Ovary (tissue), 10 donors: ENCODE measurements at regions of chr1 and their contacts with region 1.

Region 1: GRCh38 chr1:18922319-18922726 is 20.0 kb upstream of the ALDH4A1 start:
- DNase-seq: peak; percentile 86 to 94 (median 90)
- H3K4me3 ChIP-seq: no peak overlapping the region
- H3K27ac ChIP-seq: peak overlapping the region; percentile 74 to 91
- H3K4me1 ChIP-seq: peaks cover 20% of the 10 kb centered on the region
- H3K27me3 ChIP-seq: no peaks in the 10 kb centered on the region
- CTCF ChIP-seq: peak in 2 of 3 donors; percentile 53 to 61
- EP300 ChIP-seq: no peak
- POLR2A ChIP-seq: peak; percentile 29

Region 2: DNA sequence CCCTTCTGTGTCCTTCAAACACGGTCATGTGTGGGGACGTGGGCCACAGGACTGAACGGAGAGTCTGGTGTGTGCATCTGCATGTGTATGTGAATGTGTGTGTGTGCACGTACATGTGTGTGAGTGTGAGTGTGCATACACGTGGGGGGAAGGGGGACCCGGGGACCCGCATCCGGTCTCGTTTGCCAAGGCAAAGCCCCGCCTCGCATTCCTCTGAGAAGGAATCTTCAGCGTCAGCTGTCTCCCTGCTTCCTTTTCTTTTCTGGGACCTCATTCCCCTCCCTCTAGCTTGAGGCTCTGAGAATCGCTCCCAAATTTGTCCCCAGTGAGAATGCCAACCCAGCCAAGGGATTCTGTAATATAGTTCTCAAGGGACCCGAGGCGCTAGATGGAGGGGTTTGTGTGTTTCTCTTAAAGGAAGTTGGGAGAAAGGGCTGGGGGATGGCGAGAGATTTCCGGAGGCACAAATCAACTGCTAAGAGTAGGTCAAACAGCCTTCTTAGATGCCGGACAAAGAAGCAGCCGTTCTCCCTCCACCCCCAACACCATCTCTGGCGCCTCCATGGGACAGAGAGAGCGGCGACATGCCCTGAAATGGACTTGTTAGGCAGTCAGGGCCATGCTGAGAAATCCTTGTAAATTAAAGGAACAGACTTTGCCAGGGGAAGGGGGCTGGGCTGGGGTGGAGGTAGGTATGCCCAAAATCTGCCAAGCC is 27.5 kb after region 1 on chr1:
- intact Hi-C with region 1: loop called in 3 of 4 experiments (anchors 5 kb)
- DNase-seq: peak in 2 of 5 donors; percentile 40 to 56
- H3K4me3 ChIP-seq: peak overlapping the region; percentile 0
- H3K27ac ChIP-seq: peak overlapping the region; percentile 44 to 45
- H3K4me1 ChIP-seq: peaks cover 14% of the 10 kb centered on the region
- H3K27me3 ChIP-seq: no peaks in the 10 kb centered on the region
- CTCF ChIP-seq: no peak
- EP300 ChIP-seq: no peak
- POLR2A ChIP-seq: no peak

Region 3: DNA sequence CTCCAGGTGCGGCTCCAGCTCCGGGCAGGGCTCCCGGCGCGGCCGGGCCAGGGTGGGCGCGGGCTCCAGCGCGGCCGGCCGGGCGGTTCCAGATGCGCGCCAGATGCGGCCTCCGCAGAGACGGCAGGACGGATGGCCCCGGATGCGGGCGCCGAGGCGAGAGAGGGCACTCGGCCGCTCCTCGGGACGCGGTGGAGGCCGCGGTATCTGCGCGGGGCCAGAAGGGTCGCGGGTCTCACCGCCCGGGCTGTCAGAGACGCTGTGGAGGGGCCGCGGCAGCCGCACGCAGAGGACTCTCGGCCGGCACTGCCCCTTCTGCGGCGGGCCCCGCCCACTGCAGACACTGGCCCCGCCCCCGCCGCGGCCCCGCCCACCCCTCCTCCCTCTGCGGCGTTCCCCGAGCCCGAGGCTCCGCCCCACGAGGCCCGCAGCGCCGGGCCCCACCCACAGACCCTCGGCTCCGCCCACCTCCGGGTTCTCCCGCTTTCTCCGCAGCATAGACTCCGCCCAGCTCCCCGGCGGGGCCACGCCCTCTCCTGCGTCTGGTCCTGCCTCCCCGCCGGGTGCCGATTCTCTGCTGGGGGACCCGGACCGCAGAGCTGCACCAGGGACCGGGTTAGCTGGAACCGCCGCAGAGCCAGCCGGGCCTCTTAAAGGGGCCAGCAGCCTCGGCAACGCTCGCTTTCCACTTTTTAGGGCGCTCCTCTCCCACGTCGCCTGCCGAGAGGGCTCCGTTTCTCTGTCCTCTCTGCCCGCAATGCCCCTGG is 34.2 kb after region 1 on chr1 and contains the start of gene IFFO2:
- intact Hi-C with region 1: loop called in 3 of 4 experiments (anchors 5 kb)
- DNase-seq: peak; percentile 98 to 99 (median 99)
- H3K4me3 ChIP-seq: peak within 1 kb of the TSS; percentile 73
- H3K27ac ChIP-seq: peak within 1 kb of the TSS; percentile 64
- H3K4me1 ChIP-seq: peaks cover 14% of the 10 kb centered on the region
- H3K27me3 ChIP-seq: no peaks in the 10 kb centered on the region
- CTCF ChIP-seq: no peak
- EP300 ChIP-seq: no peak
- POLR2A ChIP-seq: peak; percentile 86
- total RNA-seq, gene IFFO2: 3.6 to 11.2 (median 6.2) TPM

Region 4: GRCh38 chr1:18972531-18972930 is 50.2 kb after region 1 on chr1:
- intact Hi-C with region 1: no loop called
- DNase-seq: no peak
- H3K4me3 ChIP-seq: no peak overlapping the region
- H3K27ac ChIP-seq: no peak overlapping the region
- H3K4me1 ChIP-seq: no peaks in the 10 kb centered on the region
- H3K27me3 ChIP-seq: no peaks in the 10 kb centered on the region
- CTCF ChIP-seq: peak in 1 of 3 donors; percentile 33
- EP300 ChIP-seq: no peak
- POLR2A ChIP-seq: no peak